ENCODE measurements at regions of chr7 and their contacts with region 1.

Region 1: GRCh38 chr7:1959305-1960012 is 273.3 kb downstream of the MAD1L1 start:
- DNase-seq: no peak
- H3K4me3 ChIP-seq: no peak overlapping the region
- CTCF ChIP-seq: no peak
- POLR2A ChIP-seq: no peak

Region 2: GRCh38 chr7:2006921-2007381 is 47.5 kb after region 1 on chr7:
- intact Hi-C with region 1: loop called (anchors 1 kb)
- DNase-seq: peak in 1 of 2 donors; percentile 75
- H3K4me3 ChIP-seq: no peak overlapping the region
- CTCF ChIP-seq: no peak
- POLR2A ChIP-seq: no peak

Region 3: DNA sequence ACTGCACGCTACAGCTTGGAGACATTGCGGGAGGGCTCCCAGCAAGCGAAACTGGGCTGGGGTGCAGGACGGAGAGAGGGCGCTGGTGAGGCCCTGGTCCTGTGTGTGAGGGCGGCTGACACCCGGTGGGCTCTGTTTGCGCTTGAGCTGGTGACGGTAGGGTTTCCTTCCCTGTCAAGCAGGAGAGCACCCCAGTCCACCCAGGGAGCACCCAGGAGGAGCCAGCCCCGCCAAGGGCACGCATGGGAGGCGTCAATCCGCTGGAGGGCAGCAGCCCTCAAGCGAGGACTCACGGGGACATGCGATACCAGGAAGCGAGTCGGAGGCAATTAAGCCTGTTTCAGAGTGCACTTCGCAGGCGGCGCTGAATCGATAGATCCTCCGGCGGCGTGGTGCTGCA is 163.9 kb after region 1 on chr7:
- intact Hi-C with region 1: no loop called
- DNase-seq: no peak
- H3K4me3 ChIP-seq: no peak overlapping the region
- CTCF ChIP-seq: no peak
- POLR2A ChIP-seq: no peak